Heart left ventricle (tissue), 16 donors: ENCODE measurements at regions of chr14 and their contacts with region 1.

Region 1: GRCh38 chr14:69090187-69090789 is 62.6 kb downstream of the DCAF5 start:
- DNase-seq: peak in 1 of 5 donors; percentile 24
- ATAC-seq: peak in 3 of 4 donors; percentile 53 to 68 (median 58)
- H3K4me3 ChIP-seq: no peak overlapping the region
- H3K27ac ChIP-seq: peak overlapping the region in 1 of 12 donors; percentile 82
- H3K4me1 ChIP-seq: peaks cover 0 to 25% (median 10%) of the 10 kb centered on the region in 12 donors
- H3K27me3 ChIP-seq: no peaks in the 10 kb centered on the region
- CTCF ChIP-seq: peak; percentile 40 to 73 (median 58)
- POLR2A ChIP-seq: no peak

Region 2: DNA sequence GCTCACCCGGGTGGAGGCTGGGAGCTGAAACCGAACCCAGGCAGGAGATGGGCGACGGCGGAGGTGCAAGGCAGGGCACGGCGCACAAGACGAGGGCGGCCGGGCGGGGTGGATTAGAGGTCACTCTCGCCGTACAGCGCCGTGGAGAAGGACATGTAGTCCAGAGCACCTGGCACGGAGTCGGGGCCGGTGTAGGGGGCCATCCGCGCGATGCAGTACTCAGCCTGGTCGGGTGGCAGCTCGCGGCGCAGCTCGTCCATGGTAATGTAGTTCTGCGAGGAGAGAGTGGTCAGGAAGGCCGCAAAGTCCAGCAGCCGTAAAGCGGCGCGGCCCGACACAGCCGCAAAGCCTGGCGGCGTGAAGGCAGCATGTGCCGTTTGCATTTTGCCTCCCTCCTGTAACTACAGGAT is 215.5 kb before region 1 on chr14:
- intact Hi-C with region 1: loop called in 1 of 10 experiments (anchors 5 kb)
- DNase-seq: no peak
- ATAC-seq: peak in 2 of 4 donors; percentile 18 to 25
- H3K4me3 ChIP-seq: peak overlapping the region in 2 of 12 donors; percentile 33 to 44
- H3K27ac ChIP-seq: no peak overlapping the region
- H3K4me1 ChIP-seq: no peaks in the 10 kb centered on the region
- H3K27me3 ChIP-seq: no peaks in the 10 kb centered on the region
- CTCF ChIP-seq: no peak
- POLR2A ChIP-seq: no peak

Region 3: DNA sequence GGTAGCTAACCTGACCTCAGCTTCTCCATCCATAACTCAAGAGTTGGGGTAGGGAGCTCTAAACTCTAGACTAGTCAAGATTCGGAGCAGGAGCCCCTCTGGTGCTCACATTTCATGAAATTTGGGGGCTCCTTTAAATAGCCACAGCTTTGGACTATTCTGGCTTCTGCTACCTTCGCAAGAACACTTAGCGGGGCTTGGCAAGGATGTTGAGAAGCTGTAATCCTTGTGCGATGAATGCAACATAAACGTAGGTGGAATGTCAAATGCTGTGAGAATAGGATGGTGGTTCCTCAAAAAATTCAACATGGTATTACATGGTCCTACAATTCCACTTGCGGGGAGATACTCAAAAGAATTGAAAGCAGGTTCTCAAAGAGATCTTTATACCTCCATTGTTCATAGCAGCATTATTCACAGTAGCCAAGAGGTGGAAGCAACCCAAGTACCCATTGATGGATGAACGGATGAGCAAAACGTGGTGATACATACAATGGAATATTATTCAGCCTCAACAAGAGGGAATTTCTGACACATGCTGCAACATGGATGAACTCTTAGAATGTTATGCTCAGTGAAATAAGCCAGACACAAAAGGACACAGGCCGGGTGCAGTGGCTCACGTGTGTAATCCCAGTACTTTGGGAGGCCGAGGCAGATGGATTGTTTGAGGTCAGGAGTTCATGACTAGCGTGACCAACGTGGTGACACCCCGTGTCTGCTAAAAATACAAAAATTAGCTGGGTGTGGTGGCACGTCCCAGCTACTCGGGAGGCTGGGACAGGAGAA is 185.0 kb before region 1 on chr14:
- intact Hi-C with region 1: loop called in 8 of 10 experiments (anchors 5 kb)
- DNase-seq: peak in 1 of 5 donors; percentile 2
- ATAC-seq: no peak
- H3K4me3 ChIP-seq: no peak overlapping the region
- H3K27ac ChIP-seq: peak overlapping the region in 1 of 12 donors; percentile 72
- H3K4me1 ChIP-seq: peaks cover 0 to 7% (median 0%) of the 10 kb centered on the region in 12 donors
- H3K27me3 ChIP-seq: no peaks in the 10 kb centered on the region
- CTCF ChIP-seq: no peak
- POLR2A ChIP-seq: no peak

Region 4: DNA sequence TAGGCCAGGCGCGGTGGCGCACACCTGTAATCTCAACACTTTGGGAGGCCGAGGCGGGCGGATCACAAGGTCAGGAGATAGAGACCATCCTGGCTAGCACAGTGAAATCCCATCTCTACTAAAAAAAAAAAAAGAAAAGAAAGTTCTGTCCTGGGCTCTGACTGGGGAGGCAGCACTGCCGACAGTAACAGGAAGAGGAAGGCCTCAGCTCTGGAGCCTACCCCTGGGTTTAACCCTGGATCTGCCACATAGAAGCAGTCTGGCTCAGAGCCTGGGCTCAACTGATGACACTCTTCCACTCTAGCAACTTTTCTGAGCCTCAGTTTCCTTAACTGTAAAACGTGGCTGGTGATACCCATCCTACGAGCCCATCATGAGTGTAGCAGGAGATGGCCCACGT is 171.7 kb before region 1 on chr14:
- intact Hi-C with region 1: loop called in 8 of 10 experiments (anchors 5 kb)
- DNase-seq: no peak
- ATAC-seq: no peak
- H3K4me3 ChIP-seq: no peak overlapping the region
- H3K27ac ChIP-seq: peak overlapping the region in 1 of 12 donors; percentile 98
- H3K4me1 ChIP-seq: peaks cover 7 to 41% (median 23%) of the 10 kb centered on the region in 12 donors
- H3K27me3 ChIP-seq: no peaks in the 10 kb centered on the region
- CTCF ChIP-seq: no peak
- POLR2A ChIP-seq: no peak

Region 5: GRCh38 chr14:69133206-69134125 is 43.2 kb after region 1 on chr14:
- intact Hi-C with region 1: no loop called
- DNase-seq: no peak
- ATAC-seq: peak in 3 of 4 donors; percentile 22 to 63 (median 52)
- H3K4me3 ChIP-seq: no peak overlapping the region
- H3K27ac ChIP-seq: peak overlapping the region in 1 of 12 donors; percentile 12
- H3K4me1 ChIP-seq: peaks cover 2 to 69% (median 52%) of the 10 kb centered on the region in 12 donors
- H3K27me3 ChIP-seq: no peaks in the 10 kb centered on the region
- CTCF ChIP-seq: no peak
- POLR2A ChIP-seq: no peak